HCT116 (cell line): ENCODE measurements at regions of chr7 and their contacts with region 1.

Region 1: DNA sequence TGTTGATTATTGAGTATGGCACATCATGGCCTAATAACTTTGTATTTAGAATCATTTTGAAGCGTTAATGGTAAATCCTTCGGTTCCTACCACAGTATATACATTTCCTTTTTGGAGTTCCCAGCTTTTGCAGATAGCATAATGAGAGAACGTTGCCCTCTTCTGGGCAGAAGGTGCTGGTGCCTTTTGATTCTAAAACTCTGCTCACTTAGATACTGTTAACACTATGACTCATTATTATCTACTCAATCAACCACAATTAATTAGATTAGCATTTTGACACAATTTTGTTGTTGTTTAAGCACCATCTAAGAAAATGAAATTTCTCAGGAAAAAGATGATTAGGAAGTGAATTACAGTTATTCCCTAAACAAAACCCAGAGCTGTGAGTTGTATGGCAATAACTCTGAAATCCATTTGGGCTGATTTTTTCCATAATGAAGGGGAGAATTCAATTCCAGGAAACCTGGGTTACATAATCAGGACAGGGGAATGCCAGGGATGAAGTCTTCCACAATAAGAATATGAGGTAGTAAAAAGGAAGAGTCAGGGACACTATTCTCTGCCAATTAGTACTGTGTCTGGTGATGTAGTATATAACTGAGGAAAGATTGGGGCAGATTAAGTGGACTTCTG is 11.5 kb upstream of the DLD start:
- DNase-seq: peak; percentile 52
- ATAC-seq: peak; percentile 47
- H3K4me3 ChIP-seq: no peak overlapping the region
- H3K27ac ChIP-seq: no peak overlapping the region
- H3K4me1 ChIP-seq: peaks cover 7 to 14% of the 10 kb centered on the region in 2 experiments
- H3K27me3 ChIP-seq: no peaks in the 10 kb centered on the region
- CTCF ChIP-seq: peak; percentile 65 to 88 (median 79); a peak in 5 of 6 replicates
- POLR2A ChIP-seq: no peak
- RAD21 ChIP-seq: peak; percentile 85

Region 2: GRCh38 chr7:106793015-106793975 is 1086.2 kb before region 1 on chr7:
- CTCF ChIA-PET with region 1: interaction called, 5 read pairs
- POLR2A ChIA-PET with region 1: no interaction called
- RAD21 ChIA-PET with region 1: no interaction called
- intact Hi-C with region 1: loop called (anchors 5 kb)
- DNase-seq: peak; percentile 38
- ATAC-seq: peak; percentile 69
- H3K4me3 ChIP-seq: no peak overlapping the region
- H3K27ac ChIP-seq: no peak overlapping the region
- H3K4me1 ChIP-seq: no peaks in the 10 kb centered on the region
- H3K27me3 ChIP-seq: no peaks in the 10 kb centered on the region
- CTCF ChIP-seq: peak; percentile 57 to 78 (median 70); a peak in 5 of 6 replicates
- POLR2A ChIP-seq: no peak
- RAD21 ChIP-seq: peak; percentile 89

Region 3: GRCh38 chr7:107168233-107169119 is 711.0 kb before region 1 on chr7 and contains the start of gene HBP1:
- CTCF ChIA-PET with region 1: interaction called, 17 read pairs
- POLR2A ChIA-PET with region 1: interaction called, 5 read pairs
- RAD21 ChIA-PET with region 1: no interaction called
- intact Hi-C with region 1: no loop called
- DNase-seq: peak; percentile 100
- ATAC-seq: peak; percentile 88
- H3K4me3 ChIP-seq: peak within 1 kb of the TSS; percentile 70 to 75
- H3K27ac ChIP-seq: peak within 1 kb of the TSS; percentile 67
- H3K4me1 ChIP-seq: peaks cover 5 to 18% of the 10 kb centered on the region in 2 experiments; a peak in 3 of 4 replicates
- H3K27me3 ChIP-seq: no peaks in the 10 kb centered on the region
- CTCF ChIP-seq: no peak
- POLR2A ChIP-seq: no peak
- RAD21 ChIP-seq: no peak
- total RNA-seq, gene HBP1: 24.3 TPM

Region 4: GRCh38 chr7:107462740-107463444 is 416.6 kb before region 1 on chr7:
- CTCF ChIA-PET with region 1: interaction called, 21 read pairs
- POLR2A ChIA-PET with region 1: no interaction called
- RAD21 ChIA-PET with region 1: interaction called in 1 of 2 experiments, 4 read pairs
- intact Hi-C with region 1: loop called (anchors 1 kb)
- DNase-seq: peak; percentile 21
- ATAC-seq: peak; percentile 95
- H3K4me3 ChIP-seq: no peak overlapping the region
- H3K27ac ChIP-seq: no peak overlapping the region
- H3K4me1 ChIP-seq: no peaks in the 10 kb centered on the region
- H3K27me3 ChIP-seq: no peaks in the 10 kb centered on the region
- CTCF ChIP-seq: peak; percentile 66 to 76 (median 74)
- POLR2A ChIP-seq: no peak
- RAD21 ChIP-seq: peak; percentile 92

Region 5: DNA sequence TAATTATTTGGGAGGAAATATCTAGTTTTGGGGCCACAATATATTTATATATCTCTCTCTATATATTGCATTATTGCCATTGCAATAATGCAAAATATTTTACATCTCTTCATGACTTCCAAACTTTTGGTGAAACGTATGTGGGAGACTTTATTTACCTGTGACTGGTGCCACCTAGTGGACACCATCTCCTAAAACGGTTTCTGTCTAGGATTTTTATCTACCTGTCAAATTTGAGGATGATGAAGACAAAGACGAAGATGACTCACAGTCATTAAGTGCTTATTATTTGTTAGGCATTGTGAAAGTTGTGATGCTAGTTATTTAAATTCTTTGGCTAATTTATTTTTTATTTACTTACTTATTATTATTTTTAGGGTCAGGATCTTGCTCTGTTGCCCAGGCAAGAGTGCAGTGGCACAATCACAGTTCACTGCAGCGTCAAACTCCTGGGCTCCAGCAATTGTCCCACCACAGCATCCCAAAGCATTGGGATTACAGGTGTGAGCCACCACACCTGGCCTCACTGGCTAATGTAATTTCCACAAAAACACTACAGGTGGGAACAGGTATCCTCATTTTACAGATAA is 154.3 kb before region 1 on chr7:
- CTCF ChIA-PET with region 1: interaction called, 7 read pairs
- POLR2A ChIA-PET with region 1: no interaction called
- RAD21 ChIA-PET with region 1: interaction called in 1 of 2 experiments, 3 read pairs
- intact Hi-C with region 1: loop called (anchors 5 kb)
- DNase-seq: peak; percentile 49
- ATAC-seq: 0 out of 2 replicates have a peak, but pooled peaks have one; percentile 42
- H3K4me3 ChIP-seq: no peak overlapping the region
- H3K27ac ChIP-seq: no peak overlapping the region
- H3K4me1 ChIP-seq: no peaks in the 10 kb centered on the region
- H3K27me3 ChIP-seq: peaks cover 8% of the 10 kb centered on the region; the same call in 1 of the 2 replicates
- CTCF ChIP-seq: peak; percentile 58 to 78 (median 75)
- POLR2A ChIP-seq: no peak
- RAD21 ChIP-seq: peak; percentile 82

Region 6: GRCh38 chr7:107867858-107868466 is 11.6 kb before region 1 on chr7:
- CTCF ChIA-PET with region 1: interaction called, 10 read pairs
- POLR2A ChIA-PET with region 1: interaction called, 3 read pairs
- RAD21 ChIA-PET with region 1: no interaction called
- intact Hi-C with region 1: no loop called
- DNase-seq: no peak
- ATAC-seq: no peak
- H3K4me3 ChIP-seq: no peak overlapping the region
- H3K27ac ChIP-seq: no peak overlapping the region
- H3K4me1 ChIP-seq: no peaks in the 10 kb centered on the region
- H3K27me3 ChIP-seq: no peaks in the 10 kb centered on the region
- CTCF ChIP-seq: no peak
- POLR2A ChIP-seq: no peak
- RAD21 ChIP-seq: peak; percentile 20; the same call in 1 of the 2 replicates